Transverse colon (tissue), 4 donors: ENCODE measurements at regions of chr1 and their contacts with region 1.

Region 1: GRCh38 chr1:43763497-43763973 is 56.2 kb downstream of the ST3GAL3 start:
- DNase-seq: peak; percentile 74
- H3K4me3 ChIP-seq: no peak overlapping the region
- H3K27ac ChIP-seq: no peak overlapping the region
- H3K4me1 ChIP-seq: peaks cover 0 to 17% (median 2%) of the 10 kb centered on the region in 4 donors
- H3K27me3 ChIP-seq: no peaks in the 10 kb centered on the region
- CTCF ChIP-seq: peak; percentile 78 to 94 (median 81)
- EP300 ChIP-seq: no peak
- POLR2A ChIP-seq: no peak

Region 2: DNA sequence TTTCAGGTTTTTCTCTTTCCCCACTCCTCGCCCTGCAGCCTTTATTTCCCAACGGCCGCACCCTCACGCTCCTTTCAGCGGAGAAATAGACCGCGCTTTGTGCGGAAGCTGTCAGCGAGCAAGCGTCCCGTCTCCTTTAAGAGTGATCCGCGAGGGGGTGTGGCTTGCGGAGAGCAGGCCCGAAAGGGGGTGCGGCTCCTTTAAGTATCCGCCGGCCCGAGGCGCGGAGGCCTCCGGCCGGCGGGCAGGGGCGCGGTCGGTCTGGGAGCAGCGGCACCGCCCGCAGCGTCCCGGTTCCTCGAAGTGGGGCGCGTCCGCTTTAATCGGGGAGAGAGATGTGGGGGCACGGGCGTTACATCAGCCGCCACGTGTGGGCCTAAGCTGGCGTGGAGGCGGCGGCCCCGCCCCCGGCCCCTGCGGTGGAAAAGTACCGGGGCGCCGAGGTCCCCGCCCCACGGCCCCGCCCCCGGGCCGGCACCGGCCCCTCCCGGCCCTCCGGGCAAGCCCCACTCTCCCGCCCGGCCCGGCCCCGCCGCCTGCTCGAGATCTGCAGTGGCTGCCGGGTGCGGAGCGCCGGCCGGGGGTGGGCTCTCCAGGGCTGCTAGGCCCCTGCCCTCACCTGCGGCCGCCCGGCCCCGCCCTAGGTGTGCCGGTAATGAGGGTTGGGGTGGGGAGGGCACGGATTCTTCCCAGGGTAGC is 266.5 kb after region 1 on chr1:
- in situ Hi-C with region 1: loop called in 1 of 4 experiments (anchors 25 kb)
- intact Hi-C with region 1: no loop called
- DNase-seq: peak; percentile 95
- H3K4me3 ChIP-seq: peak overlapping the region; percentile 82 to 90 (median 86)
- H3K27ac ChIP-seq: peak overlapping the region; percentile 90 to 98 (median 96)
- H3K4me1 ChIP-seq: peaks cover 25 to 56% (median 43%) of the 10 kb centered on the region in 4 donors
- H3K27me3 ChIP-seq: no peaks in the 10 kb centered on the region
- CTCF ChIP-seq: no peak
- EP300 ChIP-seq: peak; percentile 2
- POLR2A ChIP-seq: peak; percentile 37